PC-3 (cell line): ENCODE measurements at regions of chr7 and their contacts with region 1.

Region 1: DNA sequence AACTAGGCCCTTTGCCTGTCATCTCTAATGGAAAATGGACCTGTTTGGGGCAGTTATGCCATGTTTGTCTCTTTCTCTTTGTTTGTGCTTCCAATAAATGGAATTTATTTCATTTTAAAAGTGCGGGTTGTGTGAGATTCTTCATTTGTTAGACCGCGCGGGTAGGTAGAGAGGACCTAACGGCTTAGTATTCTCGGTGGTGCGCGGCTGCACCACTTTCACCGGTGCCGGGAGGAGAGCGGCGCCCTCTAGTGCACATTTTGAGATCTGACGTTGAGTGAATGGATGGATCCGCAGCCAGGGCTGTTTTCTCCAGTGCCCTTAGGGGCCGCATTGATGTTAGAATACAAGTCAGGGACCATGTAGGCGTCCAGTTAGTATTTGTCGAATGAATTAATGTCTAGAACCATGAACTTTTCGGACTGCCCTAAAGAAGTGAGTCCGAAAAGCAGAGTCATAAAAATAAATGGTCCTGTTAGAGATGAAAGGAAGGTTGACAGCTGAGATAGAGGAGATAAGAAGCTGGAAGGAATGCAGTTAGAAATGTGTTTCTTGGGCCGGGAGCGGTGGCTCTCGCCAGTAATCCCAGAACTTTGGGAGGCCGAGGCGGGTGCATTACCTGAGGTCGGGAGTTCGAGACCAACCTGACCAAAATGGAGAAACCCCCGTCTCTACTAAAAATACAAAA is 29.3 kb upstream of the GIMAP8 start:
- DNase-seq: peak; percentile 84
- ATAC-seq: peak; percentile 100
- H3K4me3 ChIP-seq: peak overlapping the region; percentile 29; the same call in 1 of the 2 replicates
- H3K27ac ChIP-seq: no peak overlapping the region
- H3K4me1 ChIP-seq: no peaks in the 10 kb centered on the region
- H3K27me3 ChIP-seq: no peaks in the 10 kb centered on the region
- CTCF ChIP-seq: peak; percentile 87

Region 2: GRCh38 chr7:149362696-149363095 is 1058.4 kb before region 1 on chr7:
- CTCF ChIA-PET with region 1: interaction called, 12 read pairs
- POLR2A ChIA-PET with region 1: no interaction called
- intact Hi-C with region 1: no loop called
- DNase-seq: no peak
- ATAC-seq: no peak
- H3K4me3 ChIP-seq: no peak overlapping the region
- H3K27ac ChIP-seq: no peak overlapping the region
- H3K4me1 ChIP-seq: no peaks in the 10 kb centered on the region
- H3K27me3 ChIP-seq: no peaks in the 10 kb centered on the region
- CTCF ChIP-seq: no peak

Region 3: DNA sequence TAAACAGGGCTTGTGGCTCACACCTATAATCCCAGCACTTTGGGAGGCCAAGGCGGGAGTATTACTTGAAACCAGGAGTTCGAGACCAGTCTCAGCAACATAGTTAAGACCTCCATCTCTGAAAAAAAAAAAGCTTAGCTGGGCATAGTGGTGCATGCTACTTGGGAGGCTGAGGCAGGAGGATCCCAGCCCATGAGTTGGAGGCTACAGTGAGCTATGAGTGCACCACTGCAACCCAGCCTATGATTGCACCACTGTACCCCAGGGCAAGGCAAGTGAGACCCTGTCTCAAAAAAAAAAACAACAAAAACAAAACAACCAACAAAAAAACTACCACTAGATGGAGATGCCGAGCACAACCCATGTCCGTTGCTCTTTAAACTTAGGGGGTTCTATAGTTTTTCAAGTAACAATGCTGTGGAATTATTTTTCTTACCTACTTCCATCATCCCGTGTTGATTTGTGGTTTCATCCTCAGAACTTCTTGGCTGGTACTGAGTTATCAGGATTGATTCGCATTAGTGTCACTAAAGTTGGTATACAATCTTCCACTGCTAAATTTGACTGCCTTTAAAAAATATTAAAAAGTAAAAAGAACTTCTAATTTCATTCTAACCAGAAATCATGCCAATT is 64.8 kb before region 1 on chr7:
- CTCF ChIA-PET with region 1: no interaction called
- POLR2A ChIA-PET with region 1: no interaction called
- intact Hi-C with region 1: loop called (anchors 1 kb)
- DNase-seq: peak; percentile 47
- ATAC-seq: no peak
- H3K4me3 ChIP-seq: no peak overlapping the region
- H3K27ac ChIP-seq: no peak overlapping the region
- H3K4me1 ChIP-seq: 0 out of 2 replicates have a peak, but pooled peaks cover 10% of the 10 kb centered on the region
- H3K27me3 ChIP-seq: no peaks in the 10 kb centered on the region
- CTCF ChIP-seq: peak; percentile 71